Heart right ventricle (tissue), 16 donors: ENCODE measurements at regions of chr2 and their contacts with region 1.

Region 1: GRCh38 chr2:85750587-85751575 is 2.9 kb upstream of the ATOH8 start:
- DNase-seq: peak; percentile 74 to 82
- ATAC-seq: peak; percentile 47 to 81 (median 66)
- H3K4me3 ChIP-seq: no peak overlapping the region
- H3K27ac ChIP-seq: peak overlapping the region in 6 of 10 donors; percentile 41 to 92 (median 81)
- H3K4me1 ChIP-seq: peaks cover 15 to 88% (median 60%) of the 10 kb centered on the region in 9 donors
- H3K27me3 ChIP-seq: peaks cover 0 to 52% (median 0%) of the 10 kb centered on the region in 7 donors
- CTCF ChIP-seq: peak; percentile 65 to 91 (median 82)

Region 2: DNA sequence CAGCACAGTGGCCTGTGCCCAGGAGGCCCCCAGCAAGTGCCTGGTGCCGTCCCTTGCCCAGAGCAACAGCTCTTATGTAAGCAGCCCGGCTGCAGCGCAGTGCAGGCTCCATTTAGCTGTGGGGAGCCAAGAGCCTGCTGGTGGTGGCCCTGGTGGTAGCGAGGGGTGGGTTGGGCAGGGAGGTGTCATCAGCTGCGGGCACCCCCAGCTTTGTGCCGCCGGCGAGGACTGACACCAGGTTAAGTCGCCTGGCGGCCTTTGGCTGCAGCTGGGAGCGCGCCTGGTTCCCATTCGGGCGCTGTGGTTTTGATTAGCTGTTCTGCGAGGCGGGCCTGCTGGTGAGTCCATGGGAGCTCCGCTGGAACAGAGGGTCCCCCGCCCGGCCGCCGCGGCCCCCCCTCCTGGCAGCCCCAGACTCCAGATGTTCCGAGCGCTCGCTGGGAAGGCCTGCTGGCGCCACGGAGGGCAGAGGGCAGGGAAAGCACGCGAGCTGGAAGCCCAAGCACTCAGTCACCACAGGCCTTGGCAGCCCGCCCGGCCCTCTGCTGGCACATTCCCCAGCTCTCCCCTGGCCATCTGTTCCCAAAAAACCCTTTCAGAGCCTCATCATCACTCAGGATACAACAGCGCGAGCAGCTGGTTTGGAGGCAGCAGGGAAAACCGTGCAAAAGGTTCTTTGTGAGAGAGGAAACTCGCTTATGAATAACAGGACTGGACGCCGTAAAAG is 21.3 kb after region 1 on chr2:
- intact Hi-C with region 1: loop called in 1 of 10 experiments (anchors 2 kb)
- DNase-seq: peak; percentile 98 to 99
- ATAC-seq: peak; percentile 88 to 93 (median 91)
- H3K4me3 ChIP-seq: peak overlapping the region in 8 of 10 donors; percentile 6 to 45 (median 28)
- H3K27ac ChIP-seq: peak overlapping the region; percentile 86 to 96 (median 91)
- H3K4me1 ChIP-seq: peaks cover 73 to 98% (median 93%) of the 10 kb centered on the region in 9 donors
- H3K27me3 ChIP-seq: peaks cover 0 to 5% (median 0%) of the 10 kb centered on the region in 7 donors
- CTCF ChIP-seq: peak in 4 of 9 donors; percentile 24 to 51 (median 36)

Region 3: GRCh38 chr2:85797921-85798320 is 47.0 kb after region 1 on chr2:
- intact Hi-C with region 1: loop called in 9 of 10 experiments (anchors 1 to 5 kb)
- DNase-seq: no peak
- ATAC-seq: peak; percentile 18 to 74 (median 48)
- H3K4me3 ChIP-seq: no peak overlapping the region
- H3K27ac ChIP-seq: peak overlapping the region in 4 of 10 donors; percentile 4 to 79 (median 71)
- H3K4me1 ChIP-seq: peaks cover 30 to 67% (median 50%) of the 10 kb centered on the region in 9 donors
- H3K27me3 ChIP-seq: no peaks in the 10 kb centered on the region
- CTCF ChIP-seq: peak; percentile 32 to 76 (median 60)

Region 4: GRCh38 chr2:85804583-85804982 is 53.7 kb after region 1 on chr2:
- intact Hi-C with region 1: loop called in 7 of 10 experiments (anchors 2 to 5 kb)
- DNase-seq: no peak
- ATAC-seq: peak in 1 of 8 donors; percentile 32
- H3K4me3 ChIP-seq: no peak overlapping the region
- H3K27ac ChIP-seq: no peak overlapping the region
- H3K4me1 ChIP-seq: peaks cover 0 to 8% (median 0%) of the 10 kb centered on the region in 9 donors
- H3K27me3 ChIP-seq: no peaks in the 10 kb centered on the region
- CTCF ChIP-seq: peak; percentile 51 to 72 (median 67)

Region 5: DNA sequence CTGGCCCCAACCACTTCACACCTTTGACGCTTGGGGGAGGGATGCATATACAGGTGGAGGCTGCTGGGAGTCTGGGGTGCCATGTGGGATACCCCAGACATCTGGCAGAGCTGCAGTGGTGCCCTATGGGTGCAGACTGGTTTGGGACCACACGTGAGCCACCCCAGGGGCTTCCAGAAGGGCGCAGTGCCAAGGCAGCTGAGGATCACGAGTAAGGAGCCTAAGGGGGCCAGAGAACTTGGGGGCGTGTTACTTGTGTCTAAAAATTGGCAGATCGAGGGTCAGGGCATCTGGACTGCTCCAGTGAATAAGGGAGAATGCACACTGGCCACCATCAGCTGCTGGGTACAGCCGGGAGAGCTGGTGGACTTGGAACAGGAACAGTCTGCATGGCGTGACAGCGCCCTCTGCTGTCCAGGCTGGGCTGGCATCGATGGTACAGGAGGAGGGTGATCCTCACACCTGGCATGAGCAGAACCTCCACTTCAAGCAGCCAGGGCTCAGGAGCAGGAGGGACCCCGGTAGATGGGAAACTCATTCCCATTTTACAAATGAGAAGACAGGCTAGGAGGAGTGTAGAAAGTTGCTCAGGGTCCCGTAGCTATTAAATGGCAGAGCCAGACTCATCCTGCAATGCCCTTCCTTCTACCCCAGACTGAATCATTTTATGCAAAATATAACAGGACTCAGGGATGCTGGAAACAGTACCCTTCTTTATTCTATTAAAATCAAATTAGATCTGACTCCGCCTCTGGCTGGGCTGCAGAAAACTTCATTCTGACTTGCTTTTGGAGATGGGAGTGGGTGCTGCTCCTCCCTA is 63.3 kb after region 1 on chr2:
- intact Hi-C with region 1: loop called in 3 of 10 experiments (anchors 2 to 5 kb)
- DNase-seq: peak; percentile 91 to 93
- ATAC-seq: peak; percentile 91 to 97 (median 94)
- H3K4me3 ChIP-seq: no peak overlapping the region
- H3K27ac ChIP-seq: no peak overlapping the region
- H3K4me1 ChIP-seq: peaks cover 7 to 28% (median 19%) of the 10 kb centered on the region in 9 donors
- H3K27me3 ChIP-seq: no peaks in the 10 kb centered on the region
- CTCF ChIP-seq: peak; percentile 89 to 97 (median 96)

Region 6: GRCh38 chr2:86025229-86025820 is 274.4 kb after region 1 on chr2:
- intact Hi-C with region 1: no loop called
- DNase-seq: no peak
- ATAC-seq: no peak
- H3K4me3 ChIP-seq: no peak overlapping the region
- H3K27ac ChIP-seq: peak overlapping the region in 1 of 10 donors; percentile 47
- H3K4me1 ChIP-seq: peaks cover 19 to 50% (median 34%) of the 10 kb centered on the region in 9 donors
- H3K27me3 ChIP-seq: peaks cover 0 to 9% (median 0%) of the 10 kb centered on the region in 7 donors
- CTCF ChIP-seq: no peak